Activated CD4-positive, alpha-beta memory T cell treated with anti-CD3 and anti-CD28 coated beads, Interleukin-2, amount 10 ng/mL, durations not matched to agents 7 days and 5 days (primary cell): ENCODE measurements at regions of chr3 and their contacts with region 1.

Region 1: GRCh38 chr3:100708967-100709841 is at the start of gene TFG:
- DNase-seq: peak; percentile 98
- H3K4me3 Mint-ChIP-seq: peak within 1 kb of the TSS; percentile 74
- H3K27ac Mint-ChIP-seq: peak within 1 kb of the TSS; percentile 87
- H3K4me1 Mint-ChIP-seq: peaks cover 39% of the 10 kb centered on the region
- H3K27me3 Mint-ChIP-seq: no peaks in the 10 kb centered on the region
- total RNA-seq, gene TFG: 56.4 to 56.5 TPM

Region 2: GRCh38 chr3:100725935-100726513 is 16.8 kb after region 1 on chr3:
- CTCF ChIA-PET with region 1: interaction called, 6 read pairs
- POLR2A ChIA-PET with region 1: interaction called, 11 read pairs
- DNase-seq: no peak
- H3K4me3 Mint-ChIP-seq: no peak overlapping the region
- H3K27ac Mint-ChIP-seq: no peak overlapping the region
- H3K4me1 Mint-ChIP-seq: peaks cover 28% of the 10 kb centered on the region
- H3K27me3 Mint-ChIP-seq: no peaks in the 10 kb centered on the region

Region 3: DNA sequence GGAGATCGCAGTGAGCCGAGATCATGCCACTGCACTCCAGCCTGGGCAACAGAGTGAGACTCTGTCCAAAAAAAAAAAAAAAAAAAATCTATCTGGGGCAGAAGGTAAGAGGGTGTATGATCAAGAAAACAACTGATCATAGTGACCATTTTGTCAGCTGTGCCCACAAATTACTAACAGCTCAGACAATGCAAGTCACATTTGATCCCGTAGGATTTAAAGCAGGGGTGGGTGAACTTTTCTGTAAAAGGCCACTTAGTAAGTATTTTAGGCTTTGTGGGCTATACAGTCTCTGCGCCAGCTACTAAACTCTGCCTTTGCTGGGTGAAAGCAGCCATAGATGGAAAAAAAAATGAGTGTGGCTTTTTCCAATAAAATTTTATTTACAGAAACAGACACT is 341.7 kb after region 1 on chr3:
- CTCF ChIA-PET with region 1: no interaction called
- POLR2A ChIA-PET with region 1: no interaction called
- DNase-seq: no peak
- H3K4me3 Mint-ChIP-seq: no peak overlapping the region
- H3K27ac Mint-ChIP-seq: no peak overlapping the region
- H3K4me1 Mint-ChIP-seq: no peaks in the 10 kb centered on the region
- H3K27me3 Mint-ChIP-seq: peaks cover 5% of the 10 kb centered on the region